ENCODE measurements at regions of chr16 and their contacts with region 1.

Region 1: DNA sequence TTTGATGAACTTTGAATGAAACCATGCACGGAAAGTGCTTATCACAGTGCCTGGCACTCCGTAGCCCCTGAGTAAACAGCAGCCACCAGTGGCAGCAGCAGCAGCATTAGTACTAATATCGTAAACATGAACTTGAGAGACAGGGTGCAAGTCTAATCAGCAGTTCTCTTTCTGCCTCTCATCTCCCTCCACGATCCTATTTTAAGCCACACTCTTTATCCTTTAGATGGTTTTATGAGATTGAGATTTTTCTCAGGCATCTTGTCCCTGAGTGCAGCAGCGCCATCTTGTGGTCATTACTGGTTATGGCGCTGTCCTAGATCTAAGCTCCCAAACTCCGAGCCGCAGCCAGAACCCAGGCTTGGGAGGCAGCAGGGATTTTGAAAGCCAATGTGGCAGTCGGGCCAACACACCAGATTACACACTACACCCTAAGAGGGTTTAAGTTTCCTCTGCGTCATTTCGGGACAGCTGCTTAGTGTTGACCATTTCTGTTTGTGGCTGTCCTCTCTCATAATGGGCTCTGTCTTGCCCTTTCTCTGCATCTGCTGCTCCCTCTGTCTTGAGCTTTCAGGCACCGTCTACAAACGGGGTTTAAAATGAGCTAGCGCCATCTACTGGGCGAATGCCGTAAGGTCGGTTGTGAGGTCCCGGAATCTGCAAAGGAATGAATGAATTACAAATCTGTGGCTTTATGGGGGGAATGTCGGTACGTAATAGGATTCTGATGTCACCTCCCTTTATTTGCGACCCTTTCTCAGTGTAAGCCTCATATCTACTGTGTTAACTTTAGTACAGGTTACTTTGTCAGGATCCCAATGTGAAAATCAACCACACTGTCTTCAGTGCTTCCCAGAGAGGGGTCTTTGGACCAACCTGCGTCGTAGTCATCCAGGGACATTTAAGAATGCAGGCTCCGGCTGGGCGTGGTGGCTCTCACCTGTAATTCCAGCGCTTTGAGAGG is 64.5 kb downstream of the CYLD start:
- DNase-seq: peak; percentile 79

Region 2: DNA sequence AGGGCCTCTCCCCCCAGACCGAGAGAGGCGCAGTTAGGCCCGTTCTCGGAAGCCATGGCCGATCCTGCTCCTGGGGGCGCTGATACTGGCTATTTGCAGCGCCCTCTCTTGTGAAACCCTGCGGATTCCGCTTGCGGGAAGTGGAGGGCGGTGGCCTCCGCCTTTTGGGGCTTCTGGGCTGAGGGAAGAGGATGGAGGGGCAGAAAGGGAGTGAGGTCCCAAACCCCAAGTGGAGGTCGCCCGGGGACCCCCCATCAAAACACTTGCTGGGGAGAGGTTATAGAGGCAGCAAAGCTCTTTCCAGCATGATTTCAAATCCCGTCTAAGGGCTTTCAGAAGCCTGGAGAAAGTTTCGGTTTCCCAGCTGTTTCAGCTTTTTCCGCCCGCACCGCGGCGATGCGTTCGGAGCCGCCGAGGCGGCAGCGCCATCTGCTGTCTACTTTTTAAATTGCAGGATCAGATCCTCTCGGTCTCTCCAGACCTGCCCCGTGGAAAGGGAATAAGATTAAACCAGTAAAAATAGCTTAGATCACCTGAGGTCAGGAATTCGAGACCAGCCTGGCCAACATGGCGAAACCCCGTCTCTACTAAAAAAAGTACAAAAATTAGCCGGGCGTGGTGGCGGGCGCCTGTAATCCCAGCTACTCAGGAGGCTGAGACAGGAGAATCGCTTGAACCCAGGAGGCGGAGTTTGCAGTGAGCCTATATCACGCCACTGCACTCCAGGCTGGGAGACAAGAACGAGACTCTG is 141.1 kb before region 1 on chr16:
- CTCF ChIA-PET with region 1: interaction called, 40 read pairs
- POLR2A ChIA-PET with region 1: no interaction called
- DNase-seq: peak; percentile 79

Region 3: DNA sequence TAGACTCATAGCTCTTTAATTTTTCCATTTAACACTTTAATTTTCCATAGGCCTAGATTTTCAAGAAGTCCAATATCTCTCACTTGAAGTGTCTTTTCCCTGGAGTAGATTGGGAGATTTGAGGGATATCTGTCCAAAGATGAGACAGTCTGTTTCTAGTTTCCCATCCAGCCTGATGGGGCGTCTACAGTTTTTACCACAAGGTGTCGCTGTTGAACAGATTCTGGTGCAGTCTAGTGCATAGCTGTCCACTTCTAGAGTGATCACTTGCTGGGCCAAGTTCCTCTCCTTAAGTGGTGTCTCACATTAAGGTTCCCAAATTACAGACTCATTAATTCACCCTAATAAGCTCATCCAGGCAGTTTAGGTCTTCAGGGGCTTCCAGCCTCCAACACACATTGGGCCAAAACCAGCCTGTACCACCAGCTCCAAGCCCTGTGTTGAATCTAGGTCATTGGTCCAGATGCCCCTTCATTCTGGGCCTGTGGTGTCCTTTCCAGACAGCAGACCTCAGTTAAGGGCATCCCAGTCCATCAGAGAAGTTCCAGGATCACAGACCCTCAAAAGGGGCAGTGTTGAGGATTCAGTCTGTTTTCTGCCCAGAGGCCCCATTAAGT is 134.6 kb before region 1 on chr16:
- CTCF ChIA-PET with region 1: interaction called, 40 read pairs
- POLR2A ChIA-PET with region 1: no interaction called
- DNase-seq: peak; percentile 49

Region 4: DNA sequence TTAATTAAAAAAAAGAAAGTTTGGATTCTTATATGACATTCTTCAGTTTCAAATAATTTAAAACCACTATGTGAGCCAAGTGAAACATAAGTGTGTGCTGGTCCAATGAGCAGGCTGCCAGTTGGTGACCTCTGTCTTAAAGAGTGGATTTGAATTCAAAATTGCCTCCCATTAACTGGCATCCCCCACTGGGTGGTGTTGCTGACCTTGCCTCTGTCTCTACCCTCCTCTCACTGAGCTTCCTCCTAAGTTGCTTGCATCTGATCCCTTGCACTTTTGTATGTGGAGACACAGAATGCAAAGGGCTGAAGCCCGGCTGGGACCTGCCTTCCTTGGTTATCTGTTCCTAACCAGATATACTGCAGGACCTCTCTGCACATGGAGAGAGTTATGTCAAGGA is 96.1 kb after region 1 on chr16:
- CTCF ChIA-PET with region 1: no interaction called
- POLR2A ChIA-PET with region 1: no interaction called
- DNase-seq: no peak

Measured in HEK293T (cell line).